Left ventricle myocardium superior (tissue), 1 donor: ENCODE measurements at regions of chr3 and their contacts with region 1.

Region 1: DNA sequence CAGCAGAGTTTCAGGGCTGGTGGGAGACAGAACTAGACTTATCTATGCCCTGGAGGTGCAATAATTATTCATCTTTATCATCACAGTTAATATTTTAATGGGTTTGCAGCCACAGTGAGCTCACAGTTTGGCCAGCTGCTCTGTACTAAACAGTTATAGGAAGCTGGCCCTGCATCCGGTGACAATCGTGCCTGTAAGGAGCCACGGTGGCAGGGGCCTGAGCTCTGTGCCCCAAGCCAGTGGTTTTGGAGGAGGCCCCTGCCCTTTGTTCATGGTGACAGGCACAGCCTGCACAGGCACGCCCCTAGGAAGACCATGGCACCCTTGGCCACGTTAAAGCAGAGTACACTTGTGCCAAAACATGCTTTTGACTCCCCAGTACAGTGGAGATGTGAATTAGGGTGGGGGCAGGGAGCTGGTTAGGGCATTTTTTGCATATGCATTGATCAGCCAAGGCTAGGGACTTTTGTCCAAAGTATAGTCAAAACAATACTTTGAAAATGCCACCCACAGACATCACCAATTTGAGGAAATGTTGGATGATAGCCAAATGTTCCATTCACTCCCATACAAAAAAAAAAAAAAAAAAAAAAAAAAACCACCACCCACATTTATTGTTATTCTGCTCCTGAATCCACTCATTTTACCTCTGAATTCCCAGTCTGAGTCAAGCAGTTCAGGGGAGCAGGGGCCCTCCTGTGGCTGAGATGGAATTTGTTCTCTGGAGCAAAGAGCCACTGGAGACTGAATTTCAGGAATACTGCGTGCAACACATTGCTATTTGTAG is 3.4 kb upstream of the RFTN1 start:
- DNase-seq: peak; percentile 48
- ATAC-seq: peak; percentile 42

Region 2: GRCh38 chr3:16190704-16191103 is 326.2 kb before region 1 on chr3:
- intact Hi-C with region 1: no loop called
- DNase-seq: no peak
- ATAC-seq: peak; percentile 32

Region 3: DNA sequence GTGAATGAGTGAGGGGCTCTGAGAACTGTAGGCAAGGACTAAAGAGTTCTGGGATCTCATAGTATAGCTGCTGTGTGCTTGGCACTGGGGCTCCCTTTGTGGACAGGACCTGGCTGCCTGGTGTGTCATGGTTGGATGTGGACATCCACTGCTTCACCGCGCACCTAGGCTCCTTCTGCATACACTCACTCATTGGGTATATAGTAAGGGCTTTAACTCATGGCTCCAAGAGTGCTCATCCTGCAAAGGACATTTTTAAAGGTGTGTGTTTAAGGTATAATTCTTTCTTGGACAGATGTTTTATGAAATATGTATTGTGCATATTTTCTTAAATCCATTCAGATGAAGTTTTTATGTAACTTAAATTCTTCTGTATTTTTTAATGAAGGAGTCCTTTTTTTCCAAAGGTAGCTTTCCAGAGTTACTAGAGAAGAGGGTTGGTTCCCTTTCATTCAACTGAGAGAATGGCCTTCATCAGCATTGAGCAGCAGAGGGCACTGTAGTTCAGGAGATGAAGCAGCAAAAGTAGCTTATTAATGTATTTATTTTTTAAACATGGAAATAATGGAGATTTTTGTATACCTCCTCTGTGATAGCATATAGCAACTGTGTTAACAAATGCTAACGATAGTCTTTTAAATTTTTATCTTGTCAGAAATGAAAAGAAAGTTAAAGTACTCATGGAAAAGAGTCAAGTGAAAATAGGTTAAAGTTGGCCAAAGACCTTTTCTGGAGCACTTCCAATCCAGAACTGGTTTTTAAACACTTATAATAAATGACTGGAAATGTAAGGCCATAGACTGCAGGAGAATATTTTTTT is 226.7 kb before region 1 on chr3:
- intact Hi-C with region 1: loop called (anchors 10 kb)
- DNase-seq: no peak
- ATAC-seq: no peak

Region 4: GRCh38 chr3:16370872-16371740 is 145.8 kb before region 1 on chr3:
- intact Hi-C with region 1: loop called (anchors 5 kb)
- DNase-seq: peak; percentile 62
- ATAC-seq: peak; percentile 55

Region 5: DNA sequence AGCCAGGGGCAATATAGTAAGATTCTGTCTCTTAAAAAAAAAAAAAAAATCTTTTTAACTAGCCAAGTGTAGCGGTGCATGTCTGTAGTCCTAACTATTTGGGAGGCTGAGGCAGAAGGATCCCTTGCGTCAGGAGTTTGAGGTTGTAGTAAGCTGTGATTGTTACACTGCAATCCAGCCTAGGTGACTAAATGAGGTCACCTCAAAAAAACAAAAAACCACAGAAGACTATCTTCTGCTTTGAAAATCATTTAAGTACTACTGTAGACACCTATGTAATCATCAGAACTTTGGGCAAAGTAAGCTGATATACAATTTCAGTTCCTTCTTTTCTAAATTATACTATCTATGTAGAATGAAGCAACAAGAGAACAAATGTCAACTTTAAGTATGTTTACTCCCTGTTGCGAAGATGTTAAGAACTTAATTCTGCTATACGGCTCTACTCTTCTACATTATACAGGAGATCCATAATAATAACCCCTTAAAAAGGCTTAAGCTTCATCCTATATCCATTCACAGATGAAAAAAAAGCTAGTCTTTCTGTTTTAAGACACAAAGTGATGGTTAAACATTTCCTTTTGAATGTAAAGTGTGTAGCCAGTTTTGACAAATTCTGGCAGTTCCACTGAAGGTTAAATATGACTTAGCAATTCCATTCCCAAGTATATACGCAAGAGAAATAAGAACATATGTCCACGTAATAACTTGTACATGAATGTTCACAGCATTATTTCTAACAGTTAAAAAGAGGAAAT is 73.2 kb after region 1 on chr3:
- intact Hi-C with region 1: no loop called
- DNase-seq: no peak
- ATAC-seq: no peak